ENCODE measurements at regions of chr17 and their contacts with region 1.

Region 1: DNA sequence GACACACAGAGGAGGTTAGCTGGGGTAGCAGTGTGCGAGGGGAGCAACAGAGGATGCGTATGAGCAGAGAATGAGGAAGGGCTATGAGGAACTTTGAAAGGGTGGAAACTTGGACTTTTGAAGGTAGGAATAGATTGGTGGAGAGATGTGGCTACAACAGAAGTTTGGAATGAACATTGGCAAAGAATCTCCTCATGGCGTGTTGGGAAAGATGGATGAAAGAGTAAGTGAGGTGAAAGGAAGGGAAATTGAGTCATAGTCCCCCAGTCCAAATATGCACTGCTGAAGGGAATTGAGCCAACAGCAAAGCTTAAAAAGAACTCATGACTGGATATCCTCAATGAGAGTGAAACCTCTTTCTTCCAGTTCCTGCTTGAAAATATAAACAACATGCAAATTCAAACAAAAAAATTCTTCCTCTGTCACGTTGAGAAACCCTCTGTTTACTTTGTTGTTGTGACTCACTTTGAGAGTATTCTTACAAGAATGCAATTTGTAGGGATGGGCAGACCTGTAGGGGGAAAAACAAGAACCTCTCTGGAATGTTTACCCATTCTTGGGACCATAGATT is 313.2 kb upstream of the KCNJ16 start:
- DNase-seq: peak; percentile 98
- ATAC-seq: peak; percentile 93
- H3K4me3 ChIP-seq: no peak overlapping the region; the same call in 1 of the 2 replicates
- H3K27ac ChIP-seq: peak overlapping the region; percentile 84
- H3K4me1 ChIP-seq: peaks cover 50% of the 10 kb centered on the region
- H3K27me3 ChIP-seq: no peaks in the 10 kb centered on the region
- CTCF ChIP-seq: no peak

Region 2: GRCh38 chr17:69539781-69540319 is 222.0 kb before region 1 on chr17:
- CTCF ChIA-PET with region 1: no interaction called
- POLR2A ChIA-PET with region 1: no interaction called
- intact Hi-C with region 1: loop called (anchors 1 kb)
- DNase-seq: peak; percentile 96
- ATAC-seq: peak; percentile 91
- H3K4me3 ChIP-seq: peak overlapping the region; percentile 43
- H3K27ac ChIP-seq: peak overlapping the region; percentile 96
- H3K4me1 ChIP-seq: peaks cover 27% of the 10 kb centered on the region
- H3K27me3 ChIP-seq: no peaks in the 10 kb centered on the region
- CTCF ChIP-seq: no peak

Region 3: DNA sequence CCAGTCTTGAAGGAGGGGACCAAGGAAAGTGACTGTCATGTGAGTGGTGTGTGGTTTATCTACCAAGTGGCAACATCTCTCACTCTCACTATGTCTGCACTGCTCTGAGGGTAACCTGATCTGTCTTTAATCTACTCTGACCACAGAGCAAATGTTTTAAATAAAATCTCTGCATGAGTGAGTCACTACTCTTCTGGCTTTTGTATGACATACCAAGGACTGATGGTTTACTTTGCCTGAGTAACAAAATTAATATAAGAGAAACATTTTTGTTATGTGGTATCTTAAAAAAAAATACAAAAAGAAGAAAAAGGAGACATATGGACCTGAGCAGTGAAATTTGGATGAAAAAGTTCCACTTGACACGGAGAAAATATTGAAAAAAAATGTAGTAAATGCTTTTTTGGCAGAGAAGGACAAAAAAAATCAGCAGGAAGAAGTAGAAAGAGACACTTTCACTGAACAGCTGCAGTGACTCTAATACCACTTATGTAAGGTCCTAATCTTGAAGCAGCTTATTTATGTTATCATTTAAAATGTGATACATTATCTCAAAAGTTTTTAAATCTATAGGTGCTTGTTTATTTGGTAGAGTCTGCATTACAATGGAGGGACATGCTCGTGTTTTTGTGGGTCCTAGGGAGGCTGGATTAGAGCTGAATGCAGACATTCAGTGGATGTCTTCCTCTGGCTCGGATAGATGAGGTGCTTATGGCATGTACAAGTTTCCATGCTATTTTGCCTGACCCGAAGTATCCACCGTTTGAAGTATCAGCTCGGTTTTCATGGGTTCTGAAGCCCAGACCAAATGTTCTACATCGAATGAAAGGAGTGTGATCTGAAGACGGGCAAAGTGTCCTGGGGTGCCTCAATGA is 106.6 kb before region 1 on chr17:
- CTCF ChIA-PET with region 1: no interaction called
- POLR2A ChIA-PET with region 1: no interaction called
- intact Hi-C with region 1: loop called (anchors 5 kb)
- DNase-seq: peak; percentile 94
- ATAC-seq: peak; percentile 100
- H3K4me3 ChIP-seq: no peak overlapping the region
- H3K27ac ChIP-seq: peak overlapping the region; percentile 11; the same call in 1 of the 2 replicates
- H3K4me1 ChIP-seq: peaks cover 18% of the 10 kb centered on the region
- H3K27me3 ChIP-seq: no peaks in the 10 kb centered on the region
- CTCF ChIP-seq: no peak

Region 4: DNA sequence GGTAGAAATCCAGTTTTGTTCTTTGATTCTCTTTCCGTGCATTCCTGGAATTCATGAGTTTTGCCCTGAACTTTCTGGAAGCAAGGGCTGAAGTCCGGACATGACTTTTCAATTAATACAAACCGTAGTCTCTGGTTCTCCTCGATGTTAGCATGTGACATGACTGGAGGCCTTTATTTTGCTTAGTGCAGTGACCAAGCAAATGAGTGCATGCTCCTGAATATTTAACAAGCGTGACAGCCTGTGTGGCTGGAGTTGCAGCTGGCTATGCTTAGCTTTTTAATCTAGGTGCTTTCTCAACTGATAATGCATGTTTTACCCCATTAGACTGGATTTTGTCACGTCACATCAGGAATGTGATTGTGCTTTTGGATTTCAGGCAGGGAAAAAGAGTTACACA is 45.3 kb before region 1 on chr17:
- CTCF ChIA-PET with region 1: no interaction called
- POLR2A ChIA-PET with region 1: no interaction called
- intact Hi-C with region 1: no loop called
- DNase-seq: no peak
- ATAC-seq: no peak
- H3K4me3 ChIP-seq: no peak overlapping the region
- H3K27ac ChIP-seq: no peak overlapping the region
- H3K4me1 ChIP-seq: no peaks in the 10 kb centered on the region
- H3K27me3 ChIP-seq: no peaks in the 10 kb centered on the region
- CTCF ChIP-seq: no peak

Region 5: GRCh38 chr17:69819316-69820087 is 57.7 kb after region 1 on chr17:
- CTCF ChIA-PET with region 1: no interaction called
- POLR2A ChIA-PET with region 1: no interaction called
- intact Hi-C with region 1: no loop called
- DNase-seq: no peak
- ATAC-seq: no peak
- H3K4me3 ChIP-seq: no peak overlapping the region
- H3K27ac ChIP-seq: no peak overlapping the region
- H3K4me1 ChIP-seq: no peaks in the 10 kb centered on the region
- H3K27me3 ChIP-seq: no peaks in the 10 kb centered on the region
- CTCF ChIP-seq: no peak

Region 6: DNA sequence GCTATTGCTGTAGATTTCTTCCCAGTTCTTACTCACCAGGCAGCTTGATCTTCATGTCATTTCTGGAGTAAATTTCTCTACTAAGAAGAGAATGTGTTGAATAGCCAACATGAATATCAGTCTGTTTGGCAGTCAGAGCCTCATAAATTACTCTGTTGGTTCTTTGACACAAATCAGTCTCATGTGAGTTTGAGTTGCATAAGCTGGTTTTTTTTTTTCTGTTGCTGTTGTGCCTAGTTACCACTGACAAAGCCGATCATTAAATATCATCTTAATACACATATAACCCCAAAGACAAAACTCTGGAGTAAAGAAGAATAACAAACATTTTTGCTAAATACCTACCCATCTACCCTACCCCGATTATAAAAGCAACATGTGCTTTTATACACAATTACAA is 72.7 kb after region 1 on chr17:
- CTCF ChIA-PET with region 1: no interaction called
- POLR2A ChIA-PET with region 1: no interaction called
- intact Hi-C with region 1: no loop called
- DNase-seq: no peak
- ATAC-seq: no peak
- H3K4me3 ChIP-seq: no peak overlapping the region
- H3K27ac ChIP-seq: no peak overlapping the region
- H3K4me1 ChIP-seq: no peaks in the 10 kb centered on the region
- H3K27me3 ChIP-seq: no peaks in the 10 kb centered on the region
- CTCF ChIP-seq: no peak

Region 7: GRCh38 chr17:70089513-70090148 is 327.8 kb after region 1 on chr17:
- CTCF ChIA-PET with region 1: no interaction called
- POLR2A ChIA-PET with region 1: no interaction called
- intact Hi-C with region 1: loop called (anchors 5 kb)
- DNase-seq: peak; percentile 62
- ATAC-seq: peak; percentile 67
- H3K4me3 ChIP-seq: no peak overlapping the region
- H3K27ac ChIP-seq: no peak overlapping the region
- H3K4me1 ChIP-seq: peaks cover 22% of the 10 kb centered on the region
- H3K27me3 ChIP-seq: no peaks in the 10 kb centered on the region
- CTCF ChIP-seq: no peak

Region 8: DNA sequence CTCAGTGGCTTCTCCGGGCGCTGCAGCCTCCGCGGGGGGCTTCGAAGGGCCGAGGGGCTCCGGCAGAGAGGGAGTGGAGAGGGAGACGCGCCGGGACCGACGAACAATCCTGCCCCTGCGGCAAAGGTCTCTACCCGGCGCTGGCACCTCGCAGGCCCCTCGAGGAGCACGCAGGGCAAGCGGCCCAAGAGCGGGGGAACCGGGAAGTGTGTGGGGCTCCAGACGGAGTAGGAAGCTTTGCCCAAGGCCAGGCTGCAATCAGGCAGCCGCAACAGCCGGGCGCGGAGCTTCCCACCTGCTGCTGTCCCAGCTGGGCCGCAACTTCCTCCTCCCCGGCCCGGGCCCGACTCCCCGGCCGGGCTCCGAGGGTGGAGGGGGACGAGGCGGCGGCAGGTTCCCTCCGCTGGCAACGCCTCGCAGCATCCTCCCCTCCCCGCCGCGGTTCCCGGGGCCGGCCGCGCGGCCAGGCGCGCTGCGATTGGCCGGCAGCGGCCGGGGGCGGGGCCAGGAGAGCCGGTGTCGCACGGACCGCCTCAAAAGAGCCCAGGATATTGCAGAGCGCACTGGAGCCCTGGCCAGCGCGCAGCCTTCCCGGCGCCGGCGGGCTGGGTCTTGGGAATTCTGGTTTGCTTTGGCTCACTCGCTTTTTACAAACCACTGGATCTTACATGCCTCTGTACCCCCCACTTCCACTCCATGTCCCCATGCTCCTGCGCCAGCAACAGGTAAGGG is 407.3 kb after region 1 on chr17 and contains the start of gene KCNJ2:
- CTCF ChIA-PET with region 1: no interaction called
- POLR2A ChIA-PET with region 1: no interaction called
- intact Hi-C with region 1: loop called (anchors 2 kb)
- DNase-seq: peak; percentile 94
- ATAC-seq: peak; percentile 91
- H3K4me3 ChIP-seq: peak within 1 kb of the TSS; percentile 72
- H3K27ac ChIP-seq: no peak within 1 kb of the TSS
- H3K4me1 ChIP-seq: peaks cover 11% of the 10 kb centered on the region
- H3K27me3 ChIP-seq: peaks cover 34% of the 10 kb centered on the region
- CTCF ChIP-seq: no peak
- total RNA-seq, gene KCNJ2: 0.36 TPM in 1 of 2 replicates, not detected in the other